Motor neuron (in vitro differentiated cells): ENCODE measurements at regions of chr4 and their contacts with region 1.

Region 1: DNA sequence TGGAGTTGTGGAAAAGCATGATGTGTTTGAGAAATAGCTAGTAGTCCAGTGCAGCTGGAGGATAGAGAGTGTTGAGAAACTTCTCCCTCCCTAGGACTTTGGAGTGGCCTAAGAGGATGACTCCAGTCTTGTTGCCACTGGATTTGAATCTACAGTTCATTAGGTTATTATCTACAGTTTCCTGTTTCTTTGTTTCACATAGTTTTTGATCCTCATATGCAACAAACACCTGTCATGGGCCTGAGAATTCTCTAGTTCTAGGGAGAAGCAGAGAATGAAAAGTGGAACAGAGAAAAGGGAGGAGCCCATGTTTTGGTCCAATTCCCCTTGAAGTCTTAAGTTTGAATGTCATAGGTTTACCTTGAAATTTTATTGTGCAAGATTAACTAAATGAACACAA is 73.6 kb upstream of the TBC1D9 start:
- ATAC-seq: no peak
- H3K4me3 ChIP-seq: no peak overlapping the region
- H3K27ac ChIP-seq: no peak overlapping the region
- H3K4me1 ChIP-seq: peaks cover 0 to 4% of the 10 kb centered on the region in 2 donors

Region 2: DNA sequence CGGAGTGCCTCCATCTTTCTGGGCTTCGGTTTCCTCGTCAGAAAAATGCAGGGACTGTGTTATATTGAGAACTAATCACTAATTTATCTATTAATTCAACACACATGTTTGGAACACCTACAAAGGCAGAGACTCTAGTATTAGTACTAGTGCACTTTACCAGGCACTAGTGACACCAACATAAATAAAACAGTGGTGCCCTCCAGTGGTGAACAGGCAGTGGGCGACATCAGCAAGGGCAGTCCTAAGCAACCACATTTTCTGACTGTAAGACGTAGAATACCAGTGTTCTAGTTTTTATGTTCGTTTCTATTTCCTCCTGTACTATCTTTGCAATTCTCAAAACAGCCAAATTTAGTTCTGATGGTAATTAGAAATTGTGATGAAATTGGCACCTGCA is 192.0 kb before region 1 on chr4:
- in situ Hi-C with region 1: loop called in 2 of 9 experiments (anchors 25 kb)
- ATAC-seq: peak in 4 of 8 experiments; percentile 49 to 77 (median 66)
- H3K4me3 ChIP-seq: no peak overlapping the region
- H3K27ac ChIP-seq: no peak overlapping the region
- H3K4me1 ChIP-seq: no peaks in the 10 kb centered on the region

Region 3: DNA sequence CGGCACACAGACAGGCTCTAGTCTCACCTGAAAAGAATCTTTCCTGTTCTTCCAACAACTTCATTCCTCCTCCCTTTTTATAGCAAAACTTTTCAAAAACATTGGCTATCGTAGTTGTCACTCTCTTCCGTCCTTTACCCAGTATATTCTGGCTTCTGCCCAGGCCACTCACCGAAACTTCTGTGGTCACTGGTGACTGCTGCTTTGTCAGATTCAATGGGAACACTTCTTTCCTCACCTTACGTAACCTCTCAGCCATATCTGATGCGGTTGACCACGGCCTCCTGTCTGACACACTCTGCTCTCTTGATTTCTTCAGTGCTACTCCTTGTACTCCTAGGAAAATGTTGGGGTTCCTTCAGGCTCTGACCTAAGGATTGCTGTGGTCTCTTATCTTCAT is 312.6 kb after region 1 on chr4:
- in situ Hi-C with region 1: no loop called
- ATAC-seq: no peak
- H3K4me3 ChIP-seq: no peak overlapping the region
- H3K27ac ChIP-seq: no peak overlapping the region
- H3K4me1 ChIP-seq: no peaks in the 10 kb centered on the region